Activated CD8-positive, alpha-beta T cell treated with anti-CD3 and anti-CD28 coated beads for 36 hours (primary cell): ENCODE measurements at regions of chr4 and their contacts with region 1.

Region 1: GRCh38 chr4:89294573-89295269 is 12.9 kb downstream of the GPRIN3 start:
- DNase-seq: no peak
- ATAC-seq: peak; percentile 65
- H3K4me3 Mint-ChIP-seq: peak overlapping the region; percentile 66
- H3K27ac Mint-ChIP-seq: peak overlapping the region; percentile 98
- H3K4me1 Mint-ChIP-seq: peaks cover 83% of the 10 kb centered on the region
- H3K27me3 Mint-ChIP-seq: no peaks in the 10 kb centered on the region
- CTCF ChIP-seq: no peak

Region 2: DNA sequence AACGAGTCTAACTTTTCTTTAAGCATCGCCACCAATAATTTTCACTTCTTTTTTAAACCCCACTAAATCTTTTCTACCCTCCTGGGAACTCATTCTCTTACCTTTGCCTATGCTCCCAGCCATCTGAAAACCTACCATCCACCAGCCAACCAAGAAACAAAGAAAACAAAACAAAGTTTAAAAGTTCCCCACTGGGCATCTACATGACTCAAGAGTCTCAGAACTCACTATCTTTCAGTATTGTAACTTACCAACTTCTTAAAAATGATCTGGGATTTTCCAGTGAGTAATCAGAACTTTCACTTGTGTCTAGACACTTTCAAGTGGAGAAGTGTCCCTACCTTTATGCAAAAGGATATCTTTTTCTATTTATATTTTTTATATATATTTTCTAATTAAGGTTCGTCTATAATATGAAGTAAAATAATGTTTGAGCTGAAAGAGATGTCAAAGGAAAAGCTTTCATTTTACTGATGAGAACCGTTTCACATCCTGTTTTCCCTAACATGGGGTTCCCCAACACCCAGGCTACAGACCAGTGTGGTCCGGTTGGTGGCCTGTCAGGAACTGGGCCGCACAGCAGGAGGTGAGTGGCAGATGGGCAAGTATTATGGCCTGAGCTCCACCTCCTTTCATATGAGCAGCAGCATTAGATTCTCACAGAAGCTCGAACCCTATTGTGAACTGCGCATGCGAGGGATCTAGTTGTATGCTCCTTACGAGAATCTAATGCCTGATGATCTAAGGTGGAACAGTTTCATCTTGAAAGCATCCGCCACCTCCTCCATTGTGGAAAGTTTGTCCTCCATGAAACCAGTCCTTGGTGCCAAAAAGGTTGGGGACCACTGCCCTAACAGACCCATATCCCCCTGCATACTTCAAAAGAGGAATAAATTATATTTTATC is 193.2 kb before region 1 on chr4:
- CTCF ChIA-PET with region 1: no interaction called
- POLR2A ChIA-PET with region 1: no interaction called
- intact Hi-C with region 1: no loop called
- DNase-seq: no peak
- ATAC-seq: peak; percentile 78
- H3K4me3 Mint-ChIP-seq: no peak overlapping the region
- H3K27ac Mint-ChIP-seq: peak overlapping the region; percentile 62
- H3K4me1 Mint-ChIP-seq: peaks cover 24% of the 10 kb centered on the region
- H3K27me3 Mint-ChIP-seq: no peaks in the 10 kb centered on the region
- CTCF ChIP-seq: no peak

Region 3: DNA sequence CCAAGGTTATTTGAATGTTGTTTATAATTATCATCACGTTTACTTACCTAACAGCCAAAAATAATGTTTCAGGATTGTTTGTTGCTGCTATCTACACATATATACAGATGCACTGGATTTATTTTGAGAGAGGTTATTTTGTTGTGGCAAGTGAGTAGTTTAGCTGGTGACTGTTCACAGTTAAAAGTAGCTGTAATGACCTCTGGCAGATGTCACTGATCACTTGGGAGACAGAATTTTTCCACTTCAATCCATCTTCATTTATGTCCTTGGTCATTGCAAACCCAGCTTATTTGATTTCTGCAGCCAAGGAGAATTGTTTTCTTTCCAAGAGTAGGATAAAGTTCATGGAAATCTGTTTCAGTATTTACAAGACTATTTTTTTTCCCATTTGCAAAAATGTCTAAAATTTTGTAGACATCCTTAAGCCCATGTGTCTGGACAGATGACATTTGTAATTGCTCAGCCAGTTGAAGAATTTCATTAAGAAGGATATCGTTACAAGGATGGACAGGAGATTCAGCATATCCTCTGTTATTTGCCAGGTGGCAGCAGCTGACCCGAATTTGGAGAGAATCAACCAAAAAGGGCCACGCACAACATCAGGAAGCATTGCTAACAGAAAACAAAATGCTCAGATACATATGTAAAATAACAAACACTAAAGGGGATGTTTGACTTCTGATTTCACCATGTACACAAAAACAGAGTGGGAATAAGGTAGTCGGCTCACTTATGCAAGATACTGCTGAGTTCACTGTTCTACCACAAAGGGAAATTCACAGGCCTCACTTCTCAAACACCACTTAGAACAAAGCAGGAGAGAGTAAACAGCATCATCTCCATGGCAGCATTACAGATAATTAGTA is 51.6 kb before region 1 on chr4:
- CTCF ChIA-PET with region 1: no interaction called
- POLR2A ChIA-PET with region 1: no interaction called
- intact Hi-C with region 1: loop called (anchors 5 kb)
- DNase-seq: no peak
- ATAC-seq: peak; percentile 88
- H3K4me3 Mint-ChIP-seq: peak overlapping the region; percentile 1
- H3K27ac Mint-ChIP-seq: peak overlapping the region; percentile 76
- H3K4me1 Mint-ChIP-seq: peaks cover 38% of the 10 kb centered on the region
- H3K27me3 Mint-ChIP-seq: no peaks in the 10 kb centered on the region
- CTCF ChIP-seq: no peak

Region 4: DNA sequence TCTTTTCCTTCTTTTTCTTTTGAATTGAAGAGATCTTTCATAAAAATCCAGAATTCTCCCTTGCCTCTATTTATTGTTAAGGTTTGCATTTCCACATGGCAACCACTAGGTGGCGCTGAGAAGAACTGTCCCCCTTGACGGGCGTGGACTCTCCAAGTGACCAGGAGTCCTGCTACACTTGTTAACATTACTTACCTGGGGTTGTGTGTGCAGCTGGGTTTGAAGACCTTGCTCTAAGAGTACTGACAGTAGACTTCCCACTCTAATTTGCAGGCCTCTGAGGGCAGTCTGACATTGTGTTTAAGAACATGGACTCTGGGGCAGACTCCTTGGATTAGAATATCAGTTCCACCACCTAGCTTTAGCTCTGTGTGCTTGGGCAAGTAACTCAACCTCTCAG is 39.9 kb before region 1 on chr4:
- CTCF ChIA-PET with region 1: interaction called, 19 read pairs
- POLR2A ChIA-PET with region 1: interaction called, 3 read pairs
- intact Hi-C with region 1: loop called (anchors 5 kb)
- DNase-seq: peak; percentile 48
- ATAC-seq: peak; percentile 76
- H3K4me3 Mint-ChIP-seq: no peak overlapping the region
- H3K27ac Mint-ChIP-seq: peak overlapping the region; percentile 75
- H3K4me1 Mint-ChIP-seq: peaks cover 61% of the 10 kb centered on the region
- H3K27me3 Mint-ChIP-seq: no peaks in the 10 kb centered on the region
- CTCF ChIP-seq: peak; percentile 86

Region 5: GRCh38 chr4:89283226-89284009 is 11.3 kb before region 1 on chr4:
- CTCF ChIA-PET with region 1: interaction called, 13 read pairs
- POLR2A ChIA-PET with region 1: interaction called, 14 read pairs
- intact Hi-C with region 1: no loop called
- DNase-seq: peak; percentile 59
- ATAC-seq: peak; percentile 54
- H3K4me3 Mint-ChIP-seq: peak overlapping the region; percentile 13
- H3K27ac Mint-ChIP-seq: peak overlapping the region; percentile 88
- H3K4me1 Mint-ChIP-seq: peaks cover 69% of the 10 kb centered on the region
- H3K27me3 Mint-ChIP-seq: no peaks in the 10 kb centered on the region
- CTCF ChIP-seq: no peak

Region 6: GRCh38 chr4:89307446-89308160 is 12.9 kb after region 1 on chr4 and contains the start of gene GPRIN3:
- CTCF ChIA-PET with region 1: interaction called, 13 read pairs
- POLR2A ChIA-PET with region 1: interaction called, 22 read pairs
- intact Hi-C with region 1: no loop called
- DNase-seq: peak; percentile 78
- ATAC-seq: peak; percentile 73
- H3K4me3 Mint-ChIP-seq: peak within 1 kb of the TSS; percentile 87
- H3K27ac Mint-ChIP-seq: peak within 1 kb of the TSS; percentile 89
- H3K4me1 Mint-ChIP-seq: peaks cover 49% of the 10 kb centered on the region
- H3K27me3 Mint-ChIP-seq: no peaks in the 10 kb centered on the region
- CTCF ChIP-seq: no peak
- total RNA-seq, gene GPRIN3: 10.6 to 11.8 TPM

Region 7: DNA sequence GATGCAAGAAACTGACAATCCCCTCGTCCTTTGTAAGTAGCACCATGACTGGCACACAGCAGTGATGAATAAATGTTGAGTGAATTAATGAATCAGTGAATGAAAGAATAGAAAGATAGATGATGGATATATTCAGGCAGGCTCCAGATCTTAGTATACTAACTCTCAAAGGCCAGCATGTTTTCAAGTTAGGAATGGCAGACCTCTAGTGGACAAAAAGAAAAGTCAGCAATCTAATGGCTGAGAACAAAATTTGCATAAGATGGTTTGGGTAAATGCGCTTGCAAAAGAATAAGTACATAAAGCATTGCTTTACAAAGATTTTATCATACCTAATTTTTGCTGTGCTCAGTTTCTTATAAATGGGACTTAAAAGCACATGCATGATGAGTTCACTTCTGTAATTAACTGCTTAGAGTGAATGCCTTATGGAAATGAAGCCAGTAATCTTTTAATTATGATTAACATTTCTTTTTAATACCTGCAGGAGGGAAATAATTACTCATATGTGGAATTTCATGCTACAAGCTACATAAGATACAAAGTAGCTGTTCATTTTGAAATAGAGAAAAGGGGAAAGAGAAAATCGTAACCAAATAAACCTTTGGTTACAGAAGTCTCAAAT is 139.8 kb after region 1 on chr4:
- CTCF ChIA-PET with region 1: interaction called, 4 read pairs
- POLR2A ChIA-PET with region 1: no interaction called
- intact Hi-C with region 1: loop called (anchors 5 kb)
- DNase-seq: no peak
- ATAC-seq: peak; percentile 59
- H3K4me3 Mint-ChIP-seq: no peak overlapping the region
- H3K27ac Mint-ChIP-seq: no peak overlapping the region
- H3K4me1 Mint-ChIP-seq: peaks cover 10% of the 10 kb centered on the region
- H3K27me3 Mint-ChIP-seq: no peaks in the 10 kb centered on the region
- CTCF ChIP-seq: peak; percentile 66